Activated CD8-positive, alpha-beta T cell treated with anti-CD3 and anti-CD28 coated beads, Interleukin-2, amount 10 ng/mL, durations not matched to agents 7 days and 5 days (primary cell): ENCODE measurements at regions of chr1 and their contacts with region 1.

Region 1: DNA sequence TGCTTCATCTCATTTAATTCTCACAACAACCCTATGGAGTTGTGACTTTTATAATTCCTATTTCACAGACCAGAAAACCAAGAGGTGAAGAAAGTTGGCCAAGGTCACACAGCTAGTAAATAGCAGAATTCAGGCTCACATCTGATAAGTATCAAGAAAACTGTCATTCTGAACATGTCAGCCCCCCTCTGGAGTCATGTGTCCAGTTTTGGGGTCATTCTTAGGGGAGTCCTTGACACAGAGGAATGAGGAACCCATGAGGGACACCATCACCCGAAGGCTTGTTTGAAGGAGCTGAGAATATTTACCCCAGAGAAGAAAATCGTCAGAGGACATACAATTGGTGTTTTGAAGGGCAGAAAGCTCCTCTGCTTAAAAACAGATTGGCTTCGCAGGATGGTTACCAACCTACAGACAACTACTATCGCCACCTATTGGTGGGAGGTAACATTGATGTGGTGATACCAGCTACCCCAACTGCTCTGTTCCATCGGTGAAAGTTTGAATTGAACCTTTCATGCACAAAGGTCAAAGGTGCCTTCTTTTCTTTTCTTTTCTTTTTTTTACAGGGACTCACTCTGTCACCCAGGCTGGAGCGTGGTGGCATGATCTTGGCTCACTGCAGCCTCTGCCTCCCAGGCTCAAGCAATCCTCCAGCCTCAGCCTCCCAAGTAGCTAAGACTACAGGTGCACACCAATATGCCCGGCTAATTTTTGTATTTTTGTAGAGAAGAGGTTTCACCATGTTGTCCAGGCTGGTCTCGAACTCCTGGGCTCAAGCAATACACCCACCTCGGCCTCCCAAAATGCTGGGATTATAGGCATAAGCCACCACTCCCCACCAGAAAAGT is 31.3 kb downstream of the NCMAP start:
- DNase-seq: peak; percentile 75
- ATAC-seq: peak; percentile 97
- H3K4me3 Mint-ChIP-seq: no peak overlapping the region
- H3K27ac Mint-ChIP-seq: no peak overlapping the region
- H3K4me1 Mint-ChIP-seq: peaks cover 13% of the 10 kb centered on the region
- H3K27me3 Mint-ChIP-seq: peaks cover 14% of the 10 kb centered on the region

Region 2: DNA sequence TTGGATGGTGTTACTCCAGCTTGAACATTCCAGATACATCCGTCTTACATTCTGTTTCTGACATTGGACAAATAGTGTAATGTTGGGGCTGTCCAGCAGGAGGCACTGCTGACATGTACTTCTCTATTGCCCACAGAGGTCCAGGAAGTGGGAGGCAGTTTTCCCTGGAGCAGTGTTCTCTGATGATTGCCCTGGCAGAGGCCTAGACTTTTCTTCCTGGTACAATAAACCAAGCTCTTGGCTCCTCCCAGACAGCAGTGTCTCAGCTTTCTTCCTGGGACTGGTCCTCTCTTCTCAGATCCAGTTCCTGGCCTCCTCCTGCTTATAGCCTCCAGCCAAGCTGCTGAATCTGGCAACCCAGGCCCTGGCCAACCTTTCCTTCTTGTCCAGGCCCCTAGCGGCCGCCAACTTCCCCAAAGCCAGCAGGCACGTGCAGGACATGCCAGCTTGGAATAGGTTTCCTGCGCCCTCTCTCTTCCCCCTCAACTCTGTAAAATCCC is 385.2 kb before region 1 on chr1:
- CTCF ChIA-PET with region 1: interaction called, 27 read pairs
- POLR2A ChIA-PET with region 1: no interaction called
- DNase-seq: peak; percentile 72
- ATAC-seq: peak; percentile 24
- H3K4me3 Mint-ChIP-seq: no peak overlapping the region
- H3K27ac Mint-ChIP-seq: no peak overlapping the region
- H3K4me1 Mint-ChIP-seq: peaks cover 9% of the 10 kb centered on the region
- H3K27me3 Mint-ChIP-seq: peaks cover 10% of the 10 kb centered on the region

Region 3: GRCh38 chr1:24486331-24487065 is 100.7 kb before region 1 on chr1:
- CTCF ChIA-PET with region 1: interaction called, 10 read pairs
- POLR2A ChIA-PET with region 1: interaction called, 4 read pairs
- DNase-seq: peak; percentile 76
- ATAC-seq: peak; percentile 64
- H3K4me3 Mint-ChIP-seq: peak overlapping the region; percentile 51
- H3K27ac Mint-ChIP-seq: peak overlapping the region; percentile 92
- H3K4me1 Mint-ChIP-seq: peaks cover 72% of the 10 kb centered on the region
- H3K27me3 Mint-ChIP-seq: no peaks in the 10 kb centered on the region

Region 4: DNA sequence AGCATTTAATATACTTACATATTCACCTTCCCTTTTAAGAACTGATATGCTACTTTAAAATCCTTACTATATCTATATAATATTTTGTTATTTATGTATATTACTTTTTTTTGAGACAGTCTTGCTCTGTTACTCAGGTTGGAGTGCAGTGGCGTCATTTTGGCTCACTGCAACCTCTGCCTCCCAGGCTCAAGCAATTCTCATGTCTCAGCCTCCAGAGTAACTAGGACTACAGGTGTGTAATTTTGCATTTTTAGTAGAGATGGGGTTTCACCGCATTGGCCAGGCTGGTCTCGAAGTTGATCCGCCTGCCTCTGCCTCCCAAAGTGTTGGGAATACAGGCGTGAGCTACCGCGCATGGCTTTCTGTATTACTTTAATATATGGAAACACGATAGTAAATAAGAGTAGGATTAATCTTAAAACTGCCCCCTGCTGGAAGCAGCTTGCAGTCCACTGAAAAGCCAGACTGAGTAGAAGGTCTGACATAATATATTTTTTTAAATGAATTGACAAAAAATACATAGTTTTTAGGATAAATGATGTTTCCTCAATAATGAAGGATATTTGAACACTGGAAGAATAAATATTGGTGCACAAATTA is 60.2 kb before region 1 on chr1:
- CTCF ChIA-PET with region 1: interaction called, 13 read pairs
- POLR2A ChIA-PET with region 1: no interaction called
- DNase-seq: peak; percentile 63
- ATAC-seq: peak; percentile 47
- H3K4me3 Mint-ChIP-seq: no peak overlapping the region
- H3K27ac Mint-ChIP-seq: no peak overlapping the region
- H3K4me1 Mint-ChIP-seq: peaks cover 21% of the 10 kb centered on the region
- H3K27me3 Mint-ChIP-seq: no peaks in the 10 kb centered on the region

Region 5: GRCh38 chr1:24541711-24542346 is 45.4 kb before region 1 on chr1:
- CTCF ChIA-PET with region 1: interaction called, 72 read pairs
- POLR2A ChIA-PET with region 1: no interaction called
- DNase-seq: peak; percentile 50
- ATAC-seq: no peak
- H3K4me3 Mint-ChIP-seq: no peak overlapping the region
- H3K27ac Mint-ChIP-seq: no peak overlapping the region
- H3K4me1 Mint-ChIP-seq: peaks cover 60% of the 10 kb centered on the region
- H3K27me3 Mint-ChIP-seq: no peaks in the 10 kb centered on the region

Region 6: DNA sequence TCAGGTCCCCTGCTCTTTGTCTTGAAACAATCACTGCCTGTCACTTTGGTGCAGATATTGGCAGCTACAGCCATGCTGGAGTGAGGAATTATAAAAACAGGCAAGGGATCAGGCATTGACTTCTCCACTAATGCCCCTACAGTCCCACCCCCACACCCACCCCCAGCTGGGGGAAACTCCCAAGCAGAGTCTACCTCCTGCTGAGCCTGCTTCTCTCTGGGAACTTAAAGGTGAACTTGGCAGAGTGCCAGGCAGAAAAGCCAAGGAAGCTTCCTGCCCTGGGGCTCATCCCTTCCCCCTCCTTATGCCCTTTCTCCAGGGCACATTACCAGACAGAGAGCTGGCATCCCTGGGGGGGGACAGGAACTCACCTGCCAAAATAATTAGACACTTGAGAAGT is 24.6 kb before region 1 on chr1:
- CTCF ChIA-PET with region 1: interaction called, 17 read pairs
- POLR2A ChIA-PET with region 1: no interaction called
- DNase-seq: no peak
- ATAC-seq: no peak
- H3K4me3 Mint-ChIP-seq: no peak overlapping the region
- H3K27ac Mint-ChIP-seq: no peak overlapping the region
- H3K4me1 Mint-ChIP-seq: peaks cover 10% of the 10 kb centered on the region
- H3K27me3 Mint-ChIP-seq: peaks cover 21% of the 10 kb centered on the region

Region 7: GRCh38 chr1:24609949-24610382 is 22.8 kb after region 1 on chr1:
- CTCF ChIA-PET with region 1: interaction called, 10 read pairs
- POLR2A ChIA-PET with region 1: no interaction called
- DNase-seq: no peak
- ATAC-seq: no peak
- H3K4me3 Mint-ChIP-seq: no peak overlapping the region
- H3K27ac Mint-ChIP-seq: no peak overlapping the region
- H3K4me1 Mint-ChIP-seq: no peaks in the 10 kb centered on the region
- H3K27me3 Mint-ChIP-seq: peaks cover 26% of the 10 kb centered on the region